Spleen (tissue), 13 donors: ENCODE measurements at regions of chr3 and their contacts with region 1.

Region 1: GRCh38 chr3:183385698-183386613 is 42.5 kb downstream of the MCF2L2 start:
- DNase-seq: no peak
- H3K4me3 ChIP-seq: no peak overlapping the region
- H3K27ac ChIP-seq: no peak overlapping the region
- H3K4me1 ChIP-seq: peaks cover 0 to 21% (median 15%) of the 10 kb centered on the region in 6 donors
- H3K27me3 ChIP-seq: no peaks in the 10 kb centered on the region
- CTCF ChIP-seq: peak; percentile 46 to 87 (median 72)
- POLR2A ChIP-seq: no peak

Region 2: GRCh38 chr3:182713743-182714517 is 672.0 kb before region 1 on chr3:
- intact Hi-C with region 1: loop called (anchors 10 kb)
- DNase-seq: no peak
- H3K4me3 ChIP-seq: no peak overlapping the region
- H3K27ac ChIP-seq: peak overlapping the region in 1 of 8 donors; percentile 0
- H3K4me1 ChIP-seq: peaks cover 0 to 25% (median 6%) of the 10 kb centered on the region in 6 donors
- H3K27me3 ChIP-seq: no peaks in the 10 kb centered on the region
- CTCF ChIP-seq: peak in 10 of 11 experiments; percentile 9 to 72 (median 56)
- POLR2A ChIP-seq: no peak

Region 3: GRCh38 chr3:183438735-183439134 is 52.8 kb after region 1 on chr3:
- intact Hi-C with region 1: no loop called
- DNase-seq: no peak
- H3K4me3 ChIP-seq: no peak overlapping the region
- H3K27ac ChIP-seq: no peak overlapping the region
- H3K4me1 ChIP-seq: peaks cover 0 to 11% (median 4%) of the 10 kb centered on the region in 6 donors
- H3K27me3 ChIP-seq: no peaks in the 10 kb centered on the region
- CTCF ChIP-seq: no peak
- POLR2A ChIP-seq: no peak

Region 4: GRCh38 chr3:183527428-183528379 is 141.7 kb after region 1 on chr3:
- intact Hi-C with region 1: no loop called
- DNase-seq: no peak
- H3K4me3 ChIP-seq: peak overlapping the region in 1 of 8 donors; percentile 24
- H3K27ac ChIP-seq: peak overlapping the region in 6 of 8 donors; percentile 35 to 81 (median 67)
- H3K4me1 ChIP-seq: peaks cover 3 to 47% (median 28%) of the 10 kb centered on the region in 6 donors
- H3K27me3 ChIP-seq: no peaks in the 10 kb centered on the region
- CTCF ChIP-seq: no peak
- POLR2A ChIP-seq: no peak